WTC11 (cell line): ENCODE measurements at regions of chr1 and their contacts with region 1.

Region 1: GRCh38 chr1:14804626-14805025 is 206.1 kb downstream of the KAZN start:
- DNase-seq: peak; percentile 58
- ATAC-seq: peak; percentile 91
- H3K4me3 Mint-ChIP-seq: no peak overlapping the region
- H3K27ac Mint-ChIP-seq: no peak overlapping the region
- H3K4me1 Mint-ChIP-seq: no peaks in the 10 kb centered on the region
- H3K27me3 Mint-ChIP-seq: no peaks in the 10 kb centered on the region; the same call in none of the 2 replicates
- CTCF ChIP-seq: peak; percentile 56

Region 2: DNA sequence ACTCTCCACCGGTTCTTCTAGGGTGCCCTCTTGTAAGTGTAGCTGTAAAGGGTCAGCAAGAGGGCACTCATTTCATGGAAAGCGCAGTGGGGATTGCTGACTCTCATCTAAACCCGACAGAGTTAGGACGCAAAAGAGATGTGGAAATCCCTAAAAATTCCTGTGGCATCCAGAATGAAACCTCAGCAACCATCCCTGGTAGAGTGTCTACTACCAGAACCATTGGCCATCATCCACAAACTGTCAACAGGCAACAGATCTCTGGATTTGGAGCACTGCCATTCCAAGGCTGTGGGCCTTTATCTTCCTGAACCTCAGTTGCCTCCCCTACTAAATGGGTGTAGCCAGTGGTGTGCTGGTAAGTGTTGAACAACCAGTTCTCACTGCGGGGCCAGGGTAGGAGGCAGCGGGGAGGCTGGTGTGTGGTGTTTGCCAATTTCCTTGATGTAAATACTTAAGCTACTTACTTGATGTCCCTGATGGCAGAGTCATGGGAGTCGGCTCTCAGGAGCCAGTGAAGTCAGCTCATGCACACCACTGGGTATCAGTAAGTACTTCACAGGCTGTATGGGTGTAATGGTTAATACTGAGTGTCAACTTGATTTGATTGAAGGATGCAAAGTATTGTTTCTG is 10.4 kb before region 1 on chr1:
- CTCF ChIA-PET with region 1: interaction called, 12 read pairs
- POLR2A ChIA-PET with region 1: no interaction called
- DNase-seq: no peak
- ATAC-seq: no peak
- H3K4me3 Mint-ChIP-seq: no peak overlapping the region
- H3K27ac Mint-ChIP-seq: no peak overlapping the region
- H3K4me1 Mint-ChIP-seq: peaks cover 3% of the 10 kb centered on the region; the same call in 1 of the 2 replicates
- H3K27me3 Mint-ChIP-seq: no peaks in the 10 kb centered on the region
- CTCF ChIP-seq: no peak

Region 3: GRCh38 chr1:14923727-14924452 is 119.3 kb after region 1 on chr1:
- CTCF ChIA-PET with region 1: no interaction called
- POLR2A ChIA-PET with region 1: no interaction called
- DNase-seq: peak; percentile 51
- ATAC-seq: peak; percentile 52
- H3K4me3 Mint-ChIP-seq: peak overlapping the region; percentile 71
- H3K27ac Mint-ChIP-seq: no peak overlapping the region
- H3K4me1 Mint-ChIP-seq: peaks cover 25% of the 10 kb centered on the region
- H3K27me3 Mint-ChIP-seq: peaks cover 46% of the 10 kb centered on the region
- CTCF ChIP-seq: no peak

Region 4: GRCh38 chr1:15141935-15142539 is 337.4 kb after region 1 on chr1:
- CTCF ChIA-PET with region 1: no interaction called
- POLR2A ChIA-PET with region 1: no interaction called
- DNase-seq: no peak
- ATAC-seq: no peak
- H3K4me3 Mint-ChIP-seq: no peak overlapping the region
- H3K27ac Mint-ChIP-seq: no peak overlapping the region
- H3K4me1 Mint-ChIP-seq: peaks cover 12% of the 10 kb centered on the region
- H3K27me3 Mint-ChIP-seq: peaks cover 2% of the 10 kb centered on the region; the same call in 1 of the 2 replicates
- CTCF ChIP-seq: no peak